ENCODE measurements at regions of chr16 and their contacts with region 1.

Region 1: GRCh38 chr16:25838724-25839186 is 147.0 kb downstream of the HS3ST4 start:
- DNase-seq: peak; percentile 40 to 57 (median 54)
- ATAC-seq: peak; percentile 69
- H3K4me3 ChIP-seq: no peak overlapping the region
- H3K27ac ChIP-seq: no peak overlapping the region
- H3K4me1 ChIP-seq: no peaks in the 10 kb centered on the region; a peak in 1 of 5 replicates
- H3K27me3 ChIP-seq: no peaks in the 10 kb centered on the region; a peak in 2 of 5 replicates
- CTCF ChIP-seq: peak; percentile 48 to 74 (median 72); a peak in 5 of 6 replicates
- EP300 ChIP-seq: no peak
- POLR2A ChIP-seq: no peak
- RAD21 ChIP-seq: peak; percentile 14 to 65; a peak in 3 of 4 replicates

Region 2: DNA sequence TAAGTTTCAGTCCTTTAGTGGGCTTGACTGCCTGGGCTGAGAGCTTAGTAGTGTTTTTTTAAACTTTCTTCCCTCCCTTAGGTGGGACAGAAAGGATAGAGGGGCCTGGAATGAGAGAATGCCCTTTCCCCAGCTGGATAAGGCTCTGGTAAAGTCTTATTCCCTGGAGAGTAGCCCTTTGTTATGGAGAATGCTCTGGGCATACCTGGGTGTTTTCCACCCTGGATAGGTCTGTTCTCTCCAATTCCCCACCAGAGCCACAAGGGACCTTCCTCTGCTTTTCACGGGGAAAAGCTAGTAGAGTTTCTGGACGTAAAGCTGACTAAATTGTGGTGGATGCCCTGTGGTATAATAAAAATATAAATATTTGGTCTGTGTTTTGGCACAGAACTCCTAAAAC is 17.1 kb after region 1 on chr16:
- CTCF ChIA-PET with region 1: no interaction called
- POLR2A ChIA-PET with region 1: no interaction called
- in situ Hi-C with region 1: no loop called
- intact Hi-C with region 1: no loop called
- DNase-seq: no peak
- ATAC-seq: no peak
- H3K4me3 ChIP-seq: no peak overlapping the region
- H3K27ac ChIP-seq: no peak overlapping the region
- H3K4me1 ChIP-seq: no peaks in the 10 kb centered on the region
- H3K27me3 ChIP-seq: no peaks in the 10 kb centered on the region
- CTCF ChIP-seq: no peak
- EP300 ChIP-seq: no peak
- POLR2A ChIP-seq: no peak
- RAD21 ChIP-seq: no peak

Region 3: DNA sequence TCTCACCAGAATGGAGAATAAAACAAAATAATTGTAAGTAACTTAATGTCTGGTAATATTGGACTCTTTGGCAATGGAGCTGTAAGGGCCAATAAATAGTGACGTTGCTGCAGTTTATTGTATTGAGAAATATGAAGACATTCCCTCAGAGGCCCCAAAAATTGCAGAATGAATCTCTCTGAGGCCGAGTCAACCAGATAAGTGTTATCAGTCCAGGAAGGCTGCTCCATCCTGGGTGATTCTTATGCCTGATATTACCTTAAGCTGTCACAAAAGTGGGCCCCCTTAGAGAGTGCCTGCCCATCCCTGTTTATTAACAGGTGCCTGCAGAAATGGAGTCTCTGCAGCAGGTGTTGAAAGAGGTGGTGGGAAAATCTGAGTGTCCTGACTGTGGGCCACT is 72.2 kb after region 1 on chr16:
- CTCF ChIA-PET with region 1: no interaction called
- POLR2A ChIA-PET with region 1: no interaction called
- in situ Hi-C with region 1: no loop called
- intact Hi-C with region 1: no loop called
- DNase-seq: no peak
- ATAC-seq: no peak
- H3K4me3 ChIP-seq: no peak overlapping the region
- H3K27ac ChIP-seq: no peak overlapping the region
- H3K4me1 ChIP-seq: no peaks in the 10 kb centered on the region
- H3K27me3 ChIP-seq: peaks cover 0 to 4% of the 10 kb centered on the region in 2 experiments; a peak in 3 of 5 replicates
- CTCF ChIP-seq: no peak
- EP300 ChIP-seq: no peak
- POLR2A ChIP-seq: no peak
- RAD21 ChIP-seq: no peak

Region 4: GRCh38 chr16:26645614-26646013 is 806.9 kb after region 1 on chr16:
- CTCF ChIA-PET with region 1: no interaction called
- POLR2A ChIA-PET with region 1: no interaction called
- in situ Hi-C with region 1: no loop called
- intact Hi-C with region 1: loop called (anchors 1 kb)
- DNase-seq: peak; percentile 38 to 50 (median 41)
- ATAC-seq: peak; percentile 90
- H3K4me3 ChIP-seq: no peak overlapping the region
- H3K27ac ChIP-seq: no peak overlapping the region
- H3K4me1 ChIP-seq: no peaks in the 10 kb centered on the region
- H3K27me3 ChIP-seq: no peaks in the 10 kb centered on the region; a peak in 1 of 5 replicates
- CTCF ChIP-seq: peak; percentile 70 to 82 (median 73)
- EP300 ChIP-seq: no peak
- POLR2A ChIP-seq: no peak
- RAD21 ChIP-seq: peak in 1 of 2 experiments; percentile 64; a peak in 3 of 4 replicates